Esophagus squamous epithelium (tissue), 5 donors: ENCODE measurements at regions of chr10 and their contacts with region 1.

Region 1: GRCh38 chr10:88386821-88387773 is 196.0 kb downstream of the RNLS start:
- DNase-seq: no peak
- H3K4me3 ChIP-seq: peak overlapping the region in 3 of 4 donors; percentile 1 to 44 (median 5)
- H3K27ac ChIP-seq: peak overlapping the region in 3 of 4 donors; percentile 59 to 71 (median 68)
- H3K4me1 ChIP-seq: peaks cover 8 to 37% (median 19%) of the 10 kb centered on the region in 3 donors
- H3K27me3 ChIP-seq: no peaks in the 10 kb centered on the region
- CTCF ChIP-seq: no peak
- POLR2A ChIP-seq: no peak

Region 2: GRCh38 chr10:87850742-87851205 is 536.3 kb before region 1 on chr10:
- intact Hi-C with region 1: loop called (anchors 10 kb)
- DNase-seq: no peak
- H3K4me3 ChIP-seq: no peak overlapping the region
- H3K27ac ChIP-seq: no peak overlapping the region
- H3K4me1 ChIP-seq: peaks cover 0 to 15% (median 9%) of the 10 kb centered on the region in 3 donors
- H3K27me3 ChIP-seq: no peaks in the 10 kb centered on the region
- CTCF ChIP-seq: peak; percentile 34 to 70 (median 62)
- POLR2A ChIP-seq: no peak